Activated CD4-positive, alpha-beta T cell treated with anti-CD3 and anti-CD28 coated beads, Interleukin-2, amount 10 ng/mL, durations not matched to agents 24 days and 14 days (primary cell): ENCODE measurements at regions of chr3 and their contacts with region 1.

Region 1: GRCh38 chr3:57227204-57227929 is at the start of gene APPL1:
- DNase-seq: peak; percentile 98
- H3K4me3 Mint-ChIP-seq: peak within 1 kb of the TSS; percentile 91
- H3K27ac Mint-ChIP-seq: peak within 1 kb of the TSS; percentile 87
- H3K4me1 Mint-ChIP-seq: peaks cover 18% of the 10 kb centered on the region
- H3K27me3 Mint-ChIP-seq: no peaks in the 10 kb centered on the region
- total RNA-seq, gene APPL1: 40.4 and 44.8 TPM in 2 replicates

Region 2: GRCh38 chr3:56556908-56557830 is 670.2 kb before region 1 on chr3 and contains the start of gene CCDC66:
- intact Hi-C with region 1: loop called (anchors 5 kb)
- DNase-seq: peak; percentile 97
- H3K4me3 Mint-ChIP-seq: peak within 1 kb of the TSS; percentile 92
- H3K27ac Mint-ChIP-seq: peak within 1 kb of the TSS; percentile 94
- H3K4me1 Mint-ChIP-seq: peaks cover 19% of the 10 kb centered on the region
- H3K27me3 Mint-ChIP-seq: peaks cover 19% of the 10 kb centered on the region
- total RNA-seq, gene CCDC66: 36.8 and 37.8 TPM in 2 replicates

Region 3: DNA sequence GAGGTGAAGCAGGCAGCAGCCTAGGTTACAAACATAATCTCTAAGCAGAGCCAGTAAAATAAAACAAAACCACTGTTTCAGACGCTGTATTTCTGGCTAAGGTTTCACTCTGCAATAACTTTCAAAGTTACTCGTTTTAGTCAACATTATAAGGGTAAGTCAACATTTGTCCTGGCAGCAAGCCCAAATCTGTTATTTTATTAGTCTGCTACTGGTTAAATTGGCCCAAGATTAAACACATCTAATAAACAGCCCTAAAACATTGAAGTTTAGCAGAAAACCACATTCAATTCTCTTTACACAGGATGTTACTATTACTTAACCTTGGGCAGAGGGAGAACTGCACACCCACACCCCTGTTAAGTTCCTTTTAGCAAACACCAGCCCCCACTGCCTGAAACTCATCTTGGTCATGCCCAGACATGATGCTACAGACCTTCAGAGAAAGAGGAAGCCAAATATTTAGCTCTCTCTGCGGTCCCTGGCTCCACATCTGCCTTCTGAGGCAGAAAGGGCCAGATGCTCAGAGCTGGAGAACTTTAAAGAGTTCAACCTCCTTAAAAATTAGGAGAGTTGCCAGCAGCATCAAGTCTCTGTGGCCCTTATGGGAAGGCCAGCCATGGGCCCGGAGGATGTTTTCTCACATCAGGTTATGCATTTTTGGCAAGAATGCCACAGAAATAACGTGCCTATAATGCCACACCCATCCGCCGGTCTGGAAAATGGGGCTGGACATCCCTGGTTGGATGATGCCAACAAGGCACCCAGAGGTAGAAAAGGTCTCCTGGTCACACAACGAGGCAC is 443.5 kb before region 1 on chr3:
- intact Hi-C with region 1: loop called (anchors 10 kb)
- DNase-seq: peak; percentile 92
- H3K4me3 Mint-ChIP-seq: peak overlapping the region; percentile 75
- H3K27ac Mint-ChIP-seq: peak overlapping the region; percentile 95
- H3K4me1 Mint-ChIP-seq: peaks cover 87% of the 10 kb centered on the region
- H3K27me3 Mint-ChIP-seq: no peaks in the 10 kb centered on the region

Region 4: GRCh38 chr3:57169872-57170623 is 57.3 kb before region 1 on chr3:
- intact Hi-C with region 1: loop called (anchors 2 kb)
- DNase-seq: peak; percentile 87
- H3K4me3 Mint-ChIP-seq: peak overlapping the region; percentile 69
- H3K27ac Mint-ChIP-seq: no peak overlapping the region
- H3K4me1 Mint-ChIP-seq: peaks cover 6% of the 10 kb centered on the region
- H3K27me3 Mint-ChIP-seq: peaks cover 61% of the 10 kb centered on the region

Region 5: GRCh38 chr3:57199895-57200297 is 27.5 kb before region 1 on chr3 and contains the start of gene HESX1:
- intact Hi-C with region 1: no loop called
- DNase-seq: no peak
- H3K4me3 Mint-ChIP-seq: no peak within 1 kb of the TSS
- H3K27ac Mint-ChIP-seq: no peak within 1 kb of the TSS
- H3K4me1 Mint-ChIP-seq: no peaks in the 10 kb centered on the region
- H3K27me3 Mint-ChIP-seq: peaks cover 6% of the 10 kb centered on the region
- total RNA-seq, gene HESX1: 0.24 and 0.63 TPM in 2 replicates

Region 6: DNA sequence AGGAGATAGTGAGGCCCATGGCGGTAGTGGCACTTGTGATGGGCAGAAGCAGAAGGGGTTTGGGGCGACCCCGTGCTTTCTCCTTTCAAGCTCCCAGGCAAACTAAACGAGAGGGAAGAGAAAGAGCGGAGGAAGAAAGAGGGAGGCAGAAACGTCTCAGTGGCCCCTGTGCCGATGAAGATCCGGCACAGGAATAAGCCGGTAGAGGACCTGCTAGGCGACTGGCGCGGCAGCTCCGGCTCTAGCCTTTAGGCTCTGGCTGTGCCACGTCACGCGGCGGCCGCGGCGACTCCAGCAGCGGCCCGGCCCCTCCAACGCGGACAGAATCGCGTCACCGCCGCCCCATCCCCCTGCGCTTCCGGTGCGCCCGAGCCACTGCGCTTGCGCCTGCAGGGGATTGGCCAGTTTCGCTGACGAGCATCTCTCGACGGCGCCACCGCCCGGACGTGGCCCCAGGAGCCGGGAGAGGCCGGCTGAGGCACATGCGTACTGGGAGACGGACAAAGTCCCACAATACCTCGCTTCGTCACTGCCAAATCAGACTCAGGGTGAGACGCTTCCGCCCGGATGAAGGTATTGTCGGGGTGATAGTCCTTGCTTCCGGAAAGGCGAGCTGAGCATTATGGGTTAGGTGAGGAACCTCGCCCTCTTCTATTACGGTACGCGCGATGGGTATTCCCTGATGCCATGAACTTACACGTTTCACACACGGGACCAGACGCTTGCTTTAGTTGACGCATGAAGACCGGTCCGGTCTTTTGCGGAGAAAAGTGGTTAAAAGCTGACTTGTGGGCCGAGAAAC is 370.0 kb after region 1 on chr3 and contains the start of gene ARF4:
- intact Hi-C with region 1: loop called (anchors 5 kb)
- DNase-seq: peak; percentile 100
- H3K4me3 Mint-ChIP-seq: peak within 1 kb of the TSS; percentile 87
- H3K27ac Mint-ChIP-seq: peak within 1 kb of the TSS; percentile 99
- H3K4me1 Mint-ChIP-seq: peaks cover 32% of the 10 kb centered on the region
- H3K27me3 Mint-ChIP-seq: no peaks in the 10 kb centered on the region
- total RNA-seq, gene ARF4: 84.4 and 91.4 TPM in 2 replicates

Region 7: DNA sequence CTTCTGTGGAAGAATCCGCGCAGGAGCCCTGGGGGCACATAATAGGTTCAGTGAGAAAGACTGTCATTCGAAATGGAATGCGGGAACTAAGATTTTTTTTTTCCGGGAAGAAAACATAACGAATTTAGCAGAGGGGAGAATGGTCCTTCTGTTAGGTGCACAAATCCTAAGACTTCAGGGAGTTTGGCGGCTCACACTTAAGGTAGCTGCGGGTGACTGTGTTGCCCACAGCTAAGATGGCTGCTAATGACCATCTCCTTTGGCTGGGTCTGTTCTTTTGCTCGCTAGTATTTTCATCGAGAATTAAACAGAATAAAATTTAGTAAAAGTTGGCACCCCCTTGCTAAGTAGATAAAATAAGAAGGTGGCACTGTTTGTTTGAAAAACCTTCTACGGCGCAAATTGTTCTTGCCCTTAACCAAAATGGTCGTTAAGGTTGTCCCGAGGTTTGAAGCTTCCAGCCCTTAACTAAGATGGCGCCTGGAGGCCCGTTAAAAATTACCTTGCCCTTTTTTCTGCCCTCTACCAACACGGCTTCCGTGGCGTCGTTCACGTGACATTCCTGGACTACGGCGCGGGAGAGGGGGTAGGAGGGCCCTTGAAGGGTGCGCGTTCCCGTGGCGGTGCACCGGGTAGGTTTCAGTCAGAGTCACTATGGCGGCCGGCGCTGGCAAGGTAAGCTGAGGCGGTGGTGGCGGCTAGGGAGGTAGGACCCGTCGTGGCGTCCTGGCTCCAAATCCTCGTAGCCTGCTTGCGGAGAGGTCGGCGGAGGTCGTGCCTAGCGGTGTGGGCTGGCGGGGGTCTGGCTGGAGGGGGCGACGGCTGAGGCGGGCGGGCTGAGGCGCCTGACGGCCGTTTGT is 528.5 kb after region 1 on chr3 and contains the start of gene SLMAP:
- intact Hi-C with region 1: loop called (anchors 5 kb)
- DNase-seq: peak; percentile 98
- H3K4me3 Mint-ChIP-seq: peak within 1 kb of the TSS; percentile 98
- H3K27ac Mint-ChIP-seq: peak within 1 kb of the TSS; percentile 96
- H3K4me1 Mint-ChIP-seq: peaks cover 27% of the 10 kb centered on the region
- H3K27me3 Mint-ChIP-seq: peaks cover 9% of the 10 kb centered on the region
- total RNA-seq, gene SLMAP: 53.4 and 58.1 TPM in 2 replicates